HAP-1 (cell line): ENCODE measurements at regions of chr5 and their contacts with region 1.

Region 1: GRCh38 chr5:127451096-127451495 is 66.3 kb upstream of the PRRC1 start:
- DNase-seq: no peak
- H3K4me3 ChIP-seq: no peak overlapping the region
- H3K4me1 ChIP-seq: peaks cover 5% of the 10 kb centered on the region
- H3K27me3 ChIP-seq: peaks cover 6% of the 10 kb centered on the region; the same call in 1 of the 2 replicates

Region 2: GRCh38 chr5:127011961-127012644 is 439.0 kb before region 1 on chr5:
- in situ Hi-C with region 1: no loop called
- DNase-seq: no peak
- H3K4me3 ChIP-seq: no peak overlapping the region
- H3K4me1 ChIP-seq: peaks cover 17% of the 10 kb centered on the region
- H3K27me3 ChIP-seq: no peaks in the 10 kb centered on the region

Region 3: DNA sequence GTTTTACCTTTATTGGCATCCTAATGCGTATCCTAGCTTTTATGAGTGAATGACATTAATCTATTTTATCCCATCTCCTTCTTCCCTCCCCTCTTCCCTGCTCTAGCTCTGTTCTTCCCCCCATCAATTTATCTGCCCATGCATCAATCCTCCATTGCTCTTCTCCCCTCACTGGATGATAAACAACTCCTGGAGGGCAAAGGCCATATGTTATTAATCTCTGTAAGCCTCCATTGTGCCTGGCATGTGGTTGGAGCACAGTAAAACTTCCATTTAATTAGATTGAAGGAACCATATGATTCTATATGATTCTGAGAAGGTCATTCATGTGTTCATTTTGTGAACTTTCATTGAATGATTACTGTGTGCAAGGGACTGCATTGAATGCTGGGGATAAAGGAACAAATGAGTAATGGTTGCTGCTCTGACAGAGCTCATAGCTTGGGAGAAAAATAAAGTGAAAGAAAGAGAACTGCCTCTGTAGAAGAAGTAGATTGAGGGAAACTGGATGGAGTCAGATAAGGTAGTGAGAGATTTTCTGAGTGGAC is 75.5 kb before region 1 on chr5:
- in situ Hi-C with region 1: loop called (anchors 5 kb)
- DNase-seq: no peak
- H3K4me3 ChIP-seq: no peak overlapping the region
- H3K4me1 ChIP-seq: no peaks in the 10 kb centered on the region
- H3K27me3 ChIP-seq: peaks cover 5% of the 10 kb centered on the region; the same call in 1 of the 2 replicates

Region 4: GRCh38 chr5:127564002-127564769 is 113.1 kb after region 1 on chr5:
- in situ Hi-C with region 1: no loop called
- DNase-seq: peak; percentile 67 to 76
- H3K4me3 ChIP-seq: no peak overlapping the region
- H3K4me1 ChIP-seq: no peaks in the 10 kb centered on the region
- H3K27me3 ChIP-seq: peaks cover 4% of the 10 kb centered on the region